Posterior cingulate gyrus (tissue), 11 donors: ENCODE measurements at regions of chr19 and their contacts with region 1.

Region 1: GRCh38 chr19:49801966-49802690 is 11.0 kb downstream of the FUZ start:
- DNase-seq: peak; percentile 87 to 99 (median 96)

Region 2: DNA sequence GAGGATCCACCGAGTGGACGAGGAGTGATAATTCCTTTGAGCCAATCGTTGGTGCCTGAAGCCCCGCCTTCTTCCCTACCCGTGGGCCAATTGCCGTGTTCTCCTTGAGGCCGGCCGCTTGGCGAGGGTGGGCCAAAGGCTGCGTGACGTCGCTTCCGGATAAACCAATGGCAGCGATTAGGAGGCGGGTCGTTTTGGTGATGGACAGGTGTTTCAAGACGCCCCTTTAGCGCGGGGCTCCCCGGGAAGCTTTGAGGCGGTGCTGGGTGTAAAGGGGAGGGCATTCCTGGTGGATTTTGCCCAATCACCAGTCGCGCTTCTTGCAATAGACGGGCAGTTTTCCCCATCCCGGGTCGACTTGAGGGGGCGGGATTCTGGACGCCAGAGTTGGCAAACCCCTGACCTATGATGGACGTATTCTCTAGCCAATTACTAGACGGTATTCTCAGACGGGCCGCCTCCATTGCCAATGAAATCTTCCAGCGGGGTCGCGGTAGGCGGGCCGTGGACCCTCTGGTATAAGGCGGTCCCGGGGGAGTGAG is 125.4 kb before region 1 on chr19:
- intact Hi-C with region 1: no loop called
- DNase-seq: peak; percentile 99 to 100 (median 100)

Region 3: GRCh38 chr19:49766007-49766937 is 35.9 kb before region 1 on chr19:
- intact Hi-C with region 1: loop called (anchors 5 kb)
- DNase-seq: peak; percentile 98 to 100 (median 100)